ENCODE measurements at regions of chr7 and their contacts with region 1.

Region 1: GRCh38 chr7:107482571-107482970 is 12.7 kb downstream of the GPR22 start:
- DNase-seq: no peak
- ATAC-seq: no peak
- H3K4me3 ChIP-seq: no peak overlapping the region
- H3K27ac ChIP-seq: no peak overlapping the region
- H3K4me1 ChIP-seq: no peaks in the 10 kb centered on the region
- H3K27me3 ChIP-seq: no peaks in the 10 kb centered on the region
- CTCF ChIP-seq: no peak
- POLR2A ChIP-seq: no peak
- RAD21 ChIP-seq: no peak

Region 2: GRCh38 chr7:107076781-107077698 is 405.5 kb before region 1 on chr7:
- CTCF ChIA-PET with region 1: no interaction called
- POLR2A ChIA-PET with region 1: no interaction called
- dilution Hi-C with region 1: no loop called
- in situ Hi-C with region 1: no loop called
- intact Hi-C with region 1: no loop called
- DNase-seq: no peak
- ATAC-seq: no peak
- H3K4me3 ChIP-seq: no peak overlapping the region
- H3K27ac ChIP-seq: no peak overlapping the region
- H3K4me1 ChIP-seq: no peaks in the 10 kb centered on the region
- H3K27me3 ChIP-seq: no peaks in the 10 kb centered on the region
- CTCF ChIP-seq: no peak
- POLR2A ChIP-seq: no peak
- RAD21 ChIP-seq: no peak

Region 3: GRCh38 chr7:107503687-107504086 is 21.1 kb after region 1 on chr7:
- CTCF ChIA-PET with region 1: interaction called, 6 read pairs
- POLR2A ChIA-PET with region 1: no interaction called
- dilution Hi-C with region 1: no loop called
- in situ Hi-C with region 1: no loop called
- intact Hi-C with region 1: loop called (anchors 2 kb)
- DNase-seq: peak; percentile 51
- ATAC-seq: peak; percentile 80
- H3K4me3 ChIP-seq: no peak overlapping the region
- H3K27ac ChIP-seq: no peak overlapping the region
- H3K4me1 ChIP-seq: peaks cover 3% of the 10 kb centered on the region; the same call in 1 of the 2 replicates
- H3K27me3 ChIP-seq: no peaks in the 10 kb centered on the region
- CTCF ChIP-seq: 0 out of 2 replicates have a peak, but pooled peaks have one; percentile 4
- POLR2A ChIP-seq: no peak
- RAD21 ChIP-seq: no peak

Measured in IMR-90 (cell line).